AG04449 (cell line): ENCODE measurements at regions of chr1 and their contacts with region 1.

Region 1: DNA sequence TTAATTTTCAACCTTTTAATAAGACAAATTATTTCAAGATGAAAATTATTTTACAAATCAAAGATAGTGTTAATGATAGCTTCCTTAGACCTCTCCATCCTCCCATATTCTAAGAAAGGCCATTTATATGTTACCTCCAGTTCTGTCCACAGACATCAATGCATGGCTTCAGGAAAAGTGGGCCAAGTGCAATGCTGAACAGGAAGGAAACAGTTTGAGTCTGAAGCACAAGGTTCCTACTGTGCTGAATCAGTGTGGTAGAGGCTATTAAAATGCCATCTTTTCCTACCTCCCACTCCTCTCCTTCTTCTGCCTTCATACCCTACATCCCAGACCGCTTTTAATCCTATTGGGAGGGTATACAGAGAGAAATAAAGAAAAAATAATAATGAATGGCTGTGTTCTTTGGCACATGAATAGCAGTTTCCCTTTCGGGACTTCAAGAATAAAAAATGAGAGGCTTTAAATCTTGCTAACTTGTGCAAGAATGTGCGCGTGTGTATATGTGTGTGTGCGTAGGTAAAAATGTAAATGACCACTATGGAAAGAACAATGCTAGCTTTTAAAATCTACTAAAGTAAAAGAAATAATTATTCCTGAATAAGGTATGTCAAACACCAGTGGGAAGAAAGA is 62.6 kb upstream of the C1orf105 start:
- DNase-seq: no peak
- H3K4me3 ChIP-seq: no peak overlapping the region
- CTCF ChIP-seq: no peak

Region 2: GRCh38 chr1:172144445-172145061 is 213.3 kb before region 1 on chr1:
- CTCF ChIA-PET with region 1: no interaction called
- POLR2A ChIA-PET with region 1: interaction called, 18 read pairs
- DNase-seq: peak; percentile 97
- H3K4me3 ChIP-seq: peak overlapping the region; percentile 80
- CTCF ChIP-seq: no peak

Region 3: GRCh38 chr1:172308577-172308976 is 49.3 kb before region 1 on chr1:
- CTCF ChIA-PET with region 1: no interaction called
- POLR2A ChIA-PET with region 1: no interaction called
- DNase-seq: no peak
- H3K4me3 ChIP-seq: no peak overlapping the region
- CTCF ChIP-seq: no peak

Region 4: GRCh38 chr1:172322219-172323061 is 35.4 kb before region 1 on chr1:
- CTCF ChIA-PET with region 1: interaction called, 3 read pairs
- POLR2A ChIA-PET with region 1: interaction called, 17 read pairs
- DNase-seq: peak; percentile 72
- H3K4me3 ChIP-seq: peak overlapping the region; percentile 37
- CTCF ChIP-seq: no peak